Activated T-helper 2 cell treated with anti-CD3 and anti-CD28 coated beads, Interferon-gamma antibody, Interleukin-2, Interleukin-4, amounts not matched to agents 10 μg/mL and 5 μg/mL and 100 μg/mL, durations not matched to agents 14 hours and 24 hours and 36 hours (primary cell): ENCODE measurements at regions of chr14 and their contacts with region 1.

Region 1: DNA sequence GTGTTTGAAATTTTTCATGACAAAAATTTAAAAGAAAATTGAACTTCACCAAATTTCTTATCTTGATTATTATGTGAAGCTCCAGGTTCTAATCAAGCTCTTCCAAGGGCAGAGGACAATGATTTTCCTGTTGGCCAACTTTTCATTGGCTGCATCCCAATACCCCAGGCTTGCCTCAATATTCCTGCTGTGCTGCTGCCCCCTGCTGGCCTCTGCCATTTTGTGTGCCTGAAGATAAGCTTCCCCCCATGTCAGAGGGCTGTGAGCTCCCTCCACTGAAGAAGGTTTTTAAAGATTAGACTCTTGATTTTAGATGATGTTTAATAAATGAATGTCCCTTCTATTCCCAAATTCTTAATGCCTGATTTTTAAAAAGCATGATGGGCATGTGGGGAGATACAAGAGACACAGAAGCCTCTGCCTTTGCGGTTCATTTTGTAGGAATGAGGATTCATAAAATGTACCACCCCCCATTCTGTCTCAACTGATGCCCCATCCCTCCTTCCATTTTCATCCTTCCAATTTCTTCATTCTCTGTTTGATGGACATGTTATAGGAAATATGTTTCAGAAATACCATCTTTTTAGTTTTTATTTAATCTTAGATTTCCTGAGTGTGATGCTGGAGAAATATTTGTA is 76.7 kb upstream of the RGS6 start:
- DNase-seq: peak; percentile 26
- H3K4me3 Mint-ChIP-seq: no peak overlapping the region
- H3K27ac Mint-ChIP-seq: no peak overlapping the region
- H3K4me1 Mint-ChIP-seq: peaks cover 11% of the 10 kb centered on the region
- H3K27me3 Mint-ChIP-seq: peaks cover 32% of the 10 kb centered on the region

Region 2: GRCh38 chr14:71103662-71104484 is 751.6 kb before region 1 on chr14:
- intact Hi-C with region 1: loop called (anchors 2 kb)
- DNase-seq: no peak
- H3K4me3 Mint-ChIP-seq: no peak overlapping the region
- H3K27ac Mint-ChIP-seq: no peak overlapping the region
- H3K4me1 Mint-ChIP-seq: peaks cover 7% of the 10 kb centered on the region
- H3K27me3 Mint-ChIP-seq: no peaks in the 10 kb centered on the region

Region 3: GRCh38 chr14:71803524-71804260 is 51.8 kb before region 1 on chr14:
- intact Hi-C with region 1: no loop called
- DNase-seq: no peak
- H3K4me3 Mint-ChIP-seq: no peak overlapping the region
- H3K27ac Mint-ChIP-seq: no peak overlapping the region
- H3K4me1 Mint-ChIP-seq: no peaks in the 10 kb centered on the region
- H3K27me3 Mint-ChIP-seq: peaks cover 17% of the 10 kb centered on the region

Region 4: GRCh38 chr14:72598311-72598710 is 742.8 kb after region 1 on chr14:
- intact Hi-C with region 1: no loop called
- DNase-seq: no peak
- H3K4me3 Mint-ChIP-seq: no peak overlapping the region
- H3K27ac Mint-ChIP-seq: no peak overlapping the region
- H3K4me1 Mint-ChIP-seq: peaks cover 21% of the 10 kb centered on the region
- H3K27me3 Mint-ChIP-seq: peaks cover 49% of the 10 kb centered on the region